SK-N-SH (cell line): ENCODE measurements at regions of chr6 and their contacts with region 1.

Region 1: GRCh38 chr6:97508646-97509045 is 225.6 kb upstream of the MMS22L start:
- DNase-seq: no peak
- H3K4me3 ChIP-seq: no peak overlapping the region
- H3K27ac ChIP-seq: no peak overlapping the region
- H3K4me1 ChIP-seq: no peaks in the 10 kb centered on the region
- H3K27me3 ChIP-seq: no peaks in the 10 kb centered on the region
- CTCF ChIP-seq: no peak
- EP300 ChIP-seq: no peak
- RAD21 ChIP-seq: no peak

Region 2: GRCh38 chr6:97497713-97498331 is 10.8 kb before region 1 on chr6:
- CTCF ChIA-PET with region 1: interaction called, 11 read pairs
- POLR2A ChIA-PET with region 1: no interaction called
- DNase-seq: peak; percentile 30
- H3K4me3 ChIP-seq: no peak overlapping the region
- H3K27ac ChIP-seq: no peak overlapping the region
- H3K4me1 ChIP-seq: no peaks in the 10 kb centered on the region; a peak in 1 of 4 replicates
- H3K27me3 ChIP-seq: no peaks in the 10 kb centered on the region
- CTCF ChIP-seq: peak; percentile 95
- EP300 ChIP-seq: no peak
- RAD21 ChIP-seq: peak; percentile 78